ENCODE measurements at regions of chr3 and their contacts with region 1.

Region 1: GRCh38 chr3:133578548-133579191 is 5.2 kb downstream of the CDV3 start:
- DNase-seq: no peak
- ATAC-seq: no peak
- H3K4me3 ChIP-seq: peak overlapping the region in 2 of 12 donors; percentile 2 to 17
- H3K27ac ChIP-seq: no peak overlapping the region
- H3K4me1 ChIP-seq: peaks cover 4 to 69% (median 50%) of the 10 kb centered on the region in 12 donors
- H3K27me3 ChIP-seq: no peaks in the 10 kb centered on the region
- CTCF ChIP-seq: peak; percentile 21 to 59 (median 43)
- POLR2A ChIP-seq: no peak

Region 2: DNA sequence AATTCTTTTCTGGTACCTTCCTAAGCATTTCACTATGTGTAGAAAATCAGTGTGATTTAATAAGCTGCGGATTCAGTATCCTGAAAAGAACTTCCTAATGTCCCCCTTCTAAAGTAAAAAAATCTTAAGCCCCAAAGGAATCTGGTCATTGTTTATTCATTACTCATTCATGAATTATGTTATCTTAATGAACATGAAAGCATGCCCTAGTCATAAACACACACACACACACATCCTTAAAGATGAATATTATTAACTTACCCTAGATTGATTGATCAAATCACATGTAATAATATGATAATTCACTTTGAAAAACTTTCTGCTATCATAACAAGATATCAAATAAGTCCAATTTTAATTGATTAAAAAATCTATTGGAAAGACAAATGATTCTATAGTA is 275.2 kb before region 1 on chr3:
- intact Hi-C with region 1: no loop called
- DNase-seq: no peak
- ATAC-seq: no peak
- H3K4me3 ChIP-seq: no peak overlapping the region
- H3K27ac ChIP-seq: no peak overlapping the region
- H3K4me1 ChIP-seq: no peaks in the 10 kb centered on the region
- H3K27me3 ChIP-seq: no peaks in the 10 kb centered on the region
- CTCF ChIP-seq: no peak
- POLR2A ChIP-seq: no peak

Region 3: DNA sequence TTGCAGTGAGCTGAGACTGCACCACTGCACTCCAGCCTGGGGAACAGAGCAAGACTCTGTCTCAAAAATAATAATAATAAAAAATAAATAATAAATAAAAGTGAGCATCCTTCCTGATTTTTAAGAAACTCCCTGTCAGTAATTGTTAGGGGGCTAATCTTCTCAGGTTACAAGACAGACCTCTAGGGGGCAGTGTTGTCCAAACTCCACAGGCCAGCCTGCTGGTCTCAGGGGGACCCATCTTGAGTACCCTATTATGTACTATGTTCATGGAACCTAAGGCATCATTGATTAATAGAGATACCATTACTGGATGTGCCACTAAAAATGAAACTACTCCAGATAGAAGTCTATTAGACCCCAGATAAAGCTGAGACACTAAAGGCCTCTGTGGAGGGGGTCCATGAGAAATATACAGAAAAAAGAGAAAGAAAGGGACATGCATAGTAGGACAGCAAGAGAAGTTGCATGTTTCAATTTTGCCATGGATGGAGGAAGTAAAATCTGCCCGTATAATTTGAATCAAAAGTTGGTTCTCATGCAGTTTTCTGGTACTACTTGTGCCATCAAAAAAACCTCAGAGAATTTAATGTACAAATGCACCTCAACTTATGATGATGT is 90.6 kb before region 1 on chr3:
- intact Hi-C with region 1: loop called in 3 of 10 experiments (anchors 5 to 10 kb)
- DNase-seq: no peak
- ATAC-seq: no peak
- H3K4me3 ChIP-seq: no peak overlapping the region
- H3K27ac ChIP-seq: no peak overlapping the region
- H3K4me1 ChIP-seq: no peaks in the 10 kb centered on the region
- H3K27me3 ChIP-seq: no peaks in the 10 kb centered on the region
- CTCF ChIP-seq: peak; percentile 40 to 72 (median 62)
- POLR2A ChIP-seq: no peak

Region 4: DNA sequence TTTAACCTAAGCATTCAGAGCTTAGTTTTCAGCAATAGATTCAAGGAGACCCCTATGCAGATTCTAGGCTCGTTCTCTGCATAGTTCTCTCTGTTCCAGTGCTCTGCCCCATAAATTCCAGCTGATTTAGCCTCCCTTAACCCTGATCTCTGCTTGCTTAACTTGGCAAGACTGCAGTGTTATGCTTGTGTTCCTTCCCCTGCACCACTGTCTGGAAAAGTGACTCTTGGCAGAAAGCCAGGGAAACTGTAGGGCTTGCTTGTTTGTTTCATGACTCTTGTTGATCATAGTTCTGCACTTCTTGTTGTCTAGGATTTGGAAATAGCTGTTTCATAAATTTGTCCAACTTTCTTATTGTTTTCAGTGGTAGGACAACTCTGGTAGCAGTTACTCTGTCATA is 867.0 kb after region 1 on chr3:
- intact Hi-C with region 1: no loop called
- DNase-seq: peak in 4 of 5 donors; percentile 42 to 66 (median 52)
- ATAC-seq: peak; percentile 72 to 88 (median 83)
- H3K4me3 ChIP-seq: no peak overlapping the region
- H3K27ac ChIP-seq: peak overlapping the region in 1 of 12 donors; percentile 13
- H3K4me1 ChIP-seq: peaks cover 0 to 32% (median 20%) of the 10 kb centered on the region in 12 donors
- H3K27me3 ChIP-seq: no peaks in the 10 kb centered on the region
- CTCF ChIP-seq: no peak
- POLR2A ChIP-seq: no peak

Measured in heart left ventricle (tissue), 16 donors.